CD14-positive monocyte (primary cell): ENCODE measurements at regions of chr3 and their contacts with region 1.

Region 1: GRCh38 chr3:16247276-16248061 is 17.3 kb downstream of the DPH3 start:
- DNase-seq: peak; percentile 73 to 80 (median 78)
- H3K4me3 ChIP-seq: no peak overlapping the region
- H3K4me3 Mint-ChIP-seq: no peak overlapping the region
- H3K27ac ChIP-seq: no peak overlapping the region
- H3K27ac Mint-ChIP-seq: no peak overlapping the region
- H3K4me1 ChIP-seq: peaks cover 0 to 5% of the 10 kb centered on the region in 2 donors
- H3K4me1 Mint-ChIP-seq: peaks cover 7% of the 10 kb centered on the region
- H3K27me3 ChIP-seq: no peaks in the 10 kb centered on the region
- H3K27me3 Mint-ChIP-seq: peaks cover 0 to 2% (median 0%) of the 10 kb centered on the region in 3 donors
- CTCF ChIP-seq: peak; percentile 94

Region 2: DNA sequence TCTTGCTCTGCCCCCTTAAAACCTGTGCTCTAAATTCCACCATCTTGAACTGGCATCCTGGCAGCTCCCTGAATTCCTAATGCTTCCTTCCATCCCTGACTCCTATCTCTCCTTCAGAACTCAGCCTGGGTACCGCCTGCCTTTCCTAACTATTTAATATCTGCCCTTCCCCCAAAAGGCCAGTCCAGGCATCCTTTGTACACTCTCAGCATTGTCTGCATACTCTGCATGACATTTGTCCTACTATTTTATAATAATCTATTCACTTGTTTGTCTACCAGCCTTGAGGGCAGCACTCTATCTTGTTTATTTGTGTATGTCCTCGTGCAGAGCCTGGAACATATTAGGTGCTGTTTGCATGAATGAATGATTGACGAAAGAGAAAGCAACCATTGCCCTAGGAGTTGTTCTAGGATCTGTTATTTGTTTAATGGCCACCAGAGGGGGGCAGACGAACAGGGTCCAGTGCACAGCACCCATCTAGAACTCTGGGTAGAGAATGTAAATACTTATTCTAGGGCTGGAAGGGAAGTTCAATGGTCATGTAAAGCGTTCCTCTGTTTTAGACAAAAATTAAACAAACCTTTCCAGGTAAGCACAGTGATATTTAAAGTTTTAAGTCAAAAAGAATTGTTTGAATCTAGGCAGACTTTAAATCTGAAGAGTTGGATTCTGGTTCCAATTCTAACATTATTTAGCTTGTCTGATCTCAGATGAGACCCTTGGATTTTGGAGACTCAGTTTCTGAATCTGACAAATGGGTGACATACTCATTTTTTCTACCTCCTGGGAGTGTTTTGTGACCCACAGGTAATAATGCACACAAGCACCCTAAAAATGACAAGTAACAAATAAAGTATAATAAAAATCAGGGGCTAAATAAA is 198.8 kb before region 1 on chr3:
- intact Hi-C with region 1: loop called (anchors 2 to 5 kb)
- DNase-seq: peak; percentile 18 to 49 (median 47)
- H3K4me3 ChIP-seq: peak overlapping the region in 1 of 3 experiments; percentile 34
- H3K4me3 Mint-ChIP-seq: peak overlapping the region in 1 of 2 donors; percentile 76
- H3K27ac ChIP-seq: no peak overlapping the region
- H3K27ac Mint-ChIP-seq: no peak overlapping the region
- H3K4me1 ChIP-seq: peaks cover 0 to 9% of the 10 kb centered on the region in 2 donors
- H3K4me1 Mint-ChIP-seq: peaks cover 14% of the 10 kb centered on the region
- H3K27me3 ChIP-seq: no peaks in the 10 kb centered on the region
- H3K27me3 Mint-ChIP-seq: peaks cover 0 to 1% (median 0%) of the 10 kb centered on the region in 3 donors
- CTCF ChIP-seq: peak; percentile 88

Region 3: DNA sequence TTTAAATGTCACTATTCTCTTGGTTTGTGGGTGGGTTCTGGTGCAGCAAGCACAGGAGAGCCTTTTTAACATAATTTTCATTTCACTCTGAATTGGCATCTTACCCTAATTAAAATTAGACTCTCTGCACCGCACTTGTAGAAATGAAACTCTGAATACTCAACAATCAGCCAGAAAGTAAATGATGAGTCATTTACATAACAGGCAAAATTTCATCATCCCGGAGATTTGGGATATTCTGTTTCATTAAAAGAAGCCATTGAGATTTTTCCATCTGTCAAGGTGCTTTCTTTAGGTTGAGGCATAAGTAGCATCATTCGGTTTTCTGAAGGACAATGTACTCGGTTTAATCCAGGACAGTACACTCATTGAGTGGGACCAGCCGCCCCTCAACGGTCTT is 155.0 kb after region 1 on chr3:
- intact Hi-C with region 1: no loop called
- DNase-seq: peak in 2 of 3 donors; percentile 3 to 63
- H3K4me3 ChIP-seq: no peak overlapping the region
- H3K4me3 Mint-ChIP-seq: no peak overlapping the region
- H3K27ac ChIP-seq: peak overlapping the region in 1 of 2 donors; percentile 2
- H3K27ac Mint-ChIP-seq: peak overlapping the region in 5 of 7 donors; percentile 20 to 64 (median 41)
- H3K4me1 ChIP-seq: peaks cover 0 to 5% of the 10 kb centered on the region in 2 donors
- H3K4me1 Mint-ChIP-seq: peaks cover 19% of the 10 kb centered on the region
- H3K27me3 ChIP-seq: no peaks in the 10 kb centered on the region
- H3K27me3 Mint-ChIP-seq: peaks cover 0 to 7% (median 1%) of the 10 kb centered on the region in 3 donors
- CTCF ChIP-seq: no peak